ENCODE measurements at regions of chr9 and their contacts with region 1.

Region 1: DNA sequence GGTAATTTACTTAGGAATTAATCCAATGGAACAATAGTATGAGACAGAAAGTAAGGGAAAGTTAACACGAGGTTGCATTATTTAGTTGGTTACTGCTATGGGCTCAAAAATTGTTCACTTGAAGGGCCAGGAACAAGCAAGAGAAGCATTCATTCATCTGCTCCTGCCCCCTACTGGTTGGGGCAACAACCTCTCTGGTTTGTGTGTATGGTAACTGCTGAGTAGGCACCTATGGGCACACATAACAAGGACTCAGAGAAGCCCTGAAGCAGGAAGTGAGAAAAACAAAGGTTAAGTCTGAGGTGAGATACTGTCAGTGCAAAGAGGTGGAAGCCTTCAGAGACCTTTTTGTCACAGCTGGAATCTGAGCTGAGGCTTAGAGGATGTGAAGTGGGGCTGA is 34.4 kb upstream of the RANBP6 start:
- DNase-seq: no peak
- ATAC-seq: peak; percentile 32
- H3K4me3 Mint-ChIP-seq: no peak overlapping the region
- H3K27ac Mint-ChIP-seq: no peak overlapping the region
- H3K4me1 Mint-ChIP-seq: peaks cover 20% of the 10 kb centered on the region
- H3K27me3 Mint-ChIP-seq: peaks cover 10% of the 10 kb centered on the region
- CTCF ChIP-seq: no peak

Region 2: GRCh38 chr9:6015278-6016157 is 34.3 kb before region 1 on chr9 and contains the start of gene RANBP6:
- CTCF ChIA-PET with region 1: interaction called, 3 read pairs
- POLR2A ChIA-PET with region 1: interaction called, 8 read pairs
- intact Hi-C with region 1: loop called (anchors 1 kb)
- DNase-seq: peak; percentile 82
- ATAC-seq: peak; percentile 99
- H3K4me3 Mint-ChIP-seq: peak within 1 kb of the TSS; percentile 99
- H3K27ac Mint-ChIP-seq: peak within 1 kb of the TSS; percentile 97
- H3K4me1 Mint-ChIP-seq: peaks cover 39% of the 10 kb centered on the region
- H3K27me3 Mint-ChIP-seq: no peaks in the 10 kb centered on the region
- CTCF ChIP-seq: no peak
- total RNA-seq, gene RANBP6: 21.6 and 22.5 TPM in 2 replicates

Region 3: DNA sequence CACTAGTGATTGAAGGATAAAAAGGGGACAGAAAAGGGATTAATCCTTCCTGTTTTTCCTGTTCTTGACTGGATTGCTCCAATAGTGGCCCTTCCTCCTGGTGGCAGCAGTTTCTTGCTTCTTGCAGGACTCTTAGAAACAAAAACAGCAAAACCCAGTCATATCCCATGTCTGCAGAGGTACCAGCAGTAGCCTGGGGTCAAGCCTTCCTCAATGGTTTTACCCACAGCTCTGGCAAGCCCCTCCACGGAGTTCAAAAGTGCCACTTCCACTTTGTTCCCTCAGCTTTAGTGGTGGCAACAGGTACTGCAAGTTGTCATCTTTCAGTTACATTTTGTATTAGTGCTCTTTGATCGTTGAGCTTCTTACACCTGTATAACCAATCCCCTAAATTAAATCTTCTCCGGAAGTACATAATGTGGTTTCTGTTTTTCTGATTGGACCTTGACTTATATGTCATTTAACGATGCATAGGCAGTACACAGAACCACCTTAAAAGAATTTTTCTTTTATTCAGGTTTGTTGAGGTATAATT is 25.7 kb before region 1 on chr9:
- CTCF ChIA-PET with region 1: interaction called, 10 read pairs
- POLR2A ChIA-PET with region 1: no interaction called
- intact Hi-C with region 1: loop called (anchors 2 kb)
- DNase-seq: no peak
- ATAC-seq: peak; percentile 86
- H3K4me3 Mint-ChIP-seq: no peak overlapping the region
- H3K27ac Mint-ChIP-seq: no peak overlapping the region
- H3K4me1 Mint-ChIP-seq: peaks cover 4% of the 10 kb centered on the region
- H3K27me3 Mint-ChIP-seq: peaks cover 4% of the 10 kb centered on the region
- CTCF ChIP-seq: no peak

Measured in activated B cell treated with CpG ODN at 0.5 μM for 24 hours (primary cell).